AG04449 (cell line): ENCODE measurements at regions of chr2 and their contacts with region 1.

Region 1: GRCh38 chr2:30877833-30878232 is 70.6 kb upstream of the CAPN13 start:
- DNase-seq: no peak
- H3K4me3 ChIP-seq: no peak overlapping the region
- CTCF ChIP-seq: no peak

Region 2: GRCh38 chr2:30862054-30862651 is 15.7 kb before region 1 on chr2:
- CTCF ChIA-PET with region 1: interaction called, 14 read pairs
- POLR2A ChIA-PET with region 1: no interaction called
- DNase-seq: peak; percentile 17
- H3K4me3 ChIP-seq: no peak overlapping the region
- CTCF ChIP-seq: peak; percentile 68